ENCODE measurements at regions of chr12 and their contacts with region 1.

Region 1: GRCh38 chr12:98516184-98516873 is 939 bp downstream of the TMPO start:
- DNase-seq: peak; percentile 93
- H3K4me3 Mint-ChIP-seq: peak overlapping the region; percentile 96
- H3K27ac Mint-ChIP-seq: peak overlapping the region; percentile 61
- H3K4me1 Mint-ChIP-seq: peaks cover 20% of the 10 kb centered on the region
- H3K27me3 Mint-ChIP-seq: no peaks in the 10 kb centered on the region
- CTCF ChIP-seq: peak; percentile 78

Region 2: DNA sequence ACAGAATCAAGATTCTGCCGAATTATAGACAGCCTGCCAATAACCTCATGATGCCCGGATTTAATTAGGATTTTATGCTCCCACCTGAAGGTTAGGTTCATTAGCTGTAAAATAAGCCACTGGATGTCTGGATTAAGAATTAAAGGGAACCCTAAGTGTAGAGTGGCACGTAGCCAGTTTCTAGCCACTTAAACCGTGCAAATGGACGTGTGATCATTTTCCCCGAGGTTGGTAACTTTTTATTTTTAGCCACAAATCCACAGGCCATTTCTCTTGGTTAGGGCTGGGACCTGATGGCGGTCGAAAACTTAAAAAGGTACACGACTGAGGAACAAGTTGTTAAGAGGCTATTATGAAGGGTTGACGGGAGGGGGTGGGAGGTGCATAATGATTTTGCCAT is 128.2 kb before region 1 on chr12:
- CTCF ChIA-PET with region 1: no interaction called
- POLR2A ChIA-PET with region 1: no interaction called
- intact Hi-C with region 1: no loop called
- DNase-seq: no peak
- H3K4me3 Mint-ChIP-seq: no peak overlapping the region
- H3K27ac Mint-ChIP-seq: no peak overlapping the region
- H3K4me1 Mint-ChIP-seq: no peaks in the 10 kb centered on the region
- H3K27me3 Mint-ChIP-seq: peaks cover 33% of the 10 kb centered on the region
- CTCF ChIP-seq: no peak

Region 3: DNA sequence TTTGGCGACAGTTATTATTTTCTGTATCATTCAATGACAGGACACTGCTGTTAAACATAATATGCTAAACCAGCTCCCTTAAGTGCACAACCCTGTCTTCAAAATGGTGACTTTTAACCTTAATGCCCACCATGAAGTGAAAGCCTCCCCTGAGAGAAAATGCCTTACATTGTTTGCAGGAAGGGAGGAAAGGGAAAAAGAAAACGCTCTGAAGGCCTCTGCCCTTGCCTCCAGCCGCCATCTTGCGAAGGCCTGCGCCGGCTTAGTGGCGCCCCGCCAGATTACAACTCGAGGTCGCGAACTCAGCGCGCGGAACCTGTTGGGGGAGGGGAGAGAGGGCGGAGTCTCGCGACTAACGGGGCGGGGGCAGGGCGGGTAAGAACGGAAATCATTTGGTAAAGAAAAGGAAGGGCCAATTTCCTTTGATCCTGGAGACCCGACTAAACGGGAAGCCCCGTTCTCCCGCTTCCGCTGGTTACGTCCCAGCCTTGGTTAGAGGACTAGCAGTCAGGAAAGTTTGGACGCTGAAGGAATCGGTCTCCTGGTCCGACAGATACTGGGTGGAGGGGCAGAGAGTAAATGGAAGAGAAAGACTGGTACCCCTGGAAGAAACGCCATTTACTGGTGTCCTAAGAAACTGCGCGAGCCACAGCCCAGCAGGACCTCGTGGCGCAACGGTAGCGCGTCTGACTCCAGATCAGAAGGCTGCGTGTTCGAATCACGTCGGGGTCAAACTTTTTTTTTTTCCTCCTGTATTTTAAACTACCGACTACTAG is 12.5 kb before region 1 on chr12:
- CTCF ChIA-PET with region 1: interaction called, 5 read pairs
- POLR2A ChIA-PET with region 1: interaction called, 52 read pairs
- intact Hi-C with region 1: loop called (anchors 1 kb)
- DNase-seq: peak; percentile 92
- H3K4me3 Mint-ChIP-seq: peak overlapping the region; percentile 94
- H3K27ac Mint-ChIP-seq: peak overlapping the region; percentile 98
- H3K4me1 Mint-ChIP-seq: no peaks in the 10 kb centered on the region
- H3K27me3 Mint-ChIP-seq: no peaks in the 10 kb centered on the region
- CTCF ChIP-seq: no peak

Region 4: DNA sequence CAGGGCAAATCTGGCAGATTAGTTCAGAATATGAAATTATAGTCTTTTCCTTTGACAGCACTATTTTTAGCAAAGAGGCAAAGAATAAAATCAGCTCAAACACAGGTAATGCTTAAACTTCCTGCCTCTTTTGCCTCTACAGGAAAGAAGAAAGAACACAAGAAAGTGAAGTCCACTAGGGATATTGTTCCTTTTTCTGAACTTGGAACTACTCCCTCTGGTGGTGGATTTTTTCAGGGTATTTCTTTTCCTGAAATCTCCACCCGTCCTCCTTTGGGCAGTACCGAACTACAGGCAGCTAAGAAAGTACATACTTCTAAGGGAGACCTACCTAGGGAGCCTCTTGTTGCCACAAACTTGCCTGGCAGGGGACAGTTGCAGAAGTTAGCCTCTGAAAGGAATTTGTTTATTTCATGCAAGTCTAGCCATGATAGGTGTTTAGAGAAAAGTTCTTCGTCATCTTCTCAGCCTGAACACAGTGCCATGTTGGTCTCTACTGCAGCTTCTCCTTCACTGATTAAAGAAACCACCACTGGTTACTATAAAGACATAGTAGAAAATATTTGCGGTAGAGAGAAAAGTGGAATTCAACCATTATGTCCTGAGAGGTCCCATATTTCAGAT is 16.5 kb after region 1 on chr12:
- CTCF ChIA-PET with region 1: interaction called, 27 read pairs
- POLR2A ChIA-PET with region 1: interaction called, 12 read pairs
- intact Hi-C with region 1: no loop called
- DNase-seq: peak; percentile 70
- H3K4me3 Mint-ChIP-seq: no peak overlapping the region
- H3K27ac Mint-ChIP-seq: no peak overlapping the region
- H3K4me1 Mint-ChIP-seq: no peaks in the 10 kb centered on the region
- H3K27me3 Mint-ChIP-seq: no peaks in the 10 kb centered on the region
- CTCF ChIP-seq: peak; percentile 62

Measured in MCF 10A (cell line).